PC-3 (cell line): ENCODE measurements at regions of chr6 and their contacts with region 1.

Region 1: DNA sequence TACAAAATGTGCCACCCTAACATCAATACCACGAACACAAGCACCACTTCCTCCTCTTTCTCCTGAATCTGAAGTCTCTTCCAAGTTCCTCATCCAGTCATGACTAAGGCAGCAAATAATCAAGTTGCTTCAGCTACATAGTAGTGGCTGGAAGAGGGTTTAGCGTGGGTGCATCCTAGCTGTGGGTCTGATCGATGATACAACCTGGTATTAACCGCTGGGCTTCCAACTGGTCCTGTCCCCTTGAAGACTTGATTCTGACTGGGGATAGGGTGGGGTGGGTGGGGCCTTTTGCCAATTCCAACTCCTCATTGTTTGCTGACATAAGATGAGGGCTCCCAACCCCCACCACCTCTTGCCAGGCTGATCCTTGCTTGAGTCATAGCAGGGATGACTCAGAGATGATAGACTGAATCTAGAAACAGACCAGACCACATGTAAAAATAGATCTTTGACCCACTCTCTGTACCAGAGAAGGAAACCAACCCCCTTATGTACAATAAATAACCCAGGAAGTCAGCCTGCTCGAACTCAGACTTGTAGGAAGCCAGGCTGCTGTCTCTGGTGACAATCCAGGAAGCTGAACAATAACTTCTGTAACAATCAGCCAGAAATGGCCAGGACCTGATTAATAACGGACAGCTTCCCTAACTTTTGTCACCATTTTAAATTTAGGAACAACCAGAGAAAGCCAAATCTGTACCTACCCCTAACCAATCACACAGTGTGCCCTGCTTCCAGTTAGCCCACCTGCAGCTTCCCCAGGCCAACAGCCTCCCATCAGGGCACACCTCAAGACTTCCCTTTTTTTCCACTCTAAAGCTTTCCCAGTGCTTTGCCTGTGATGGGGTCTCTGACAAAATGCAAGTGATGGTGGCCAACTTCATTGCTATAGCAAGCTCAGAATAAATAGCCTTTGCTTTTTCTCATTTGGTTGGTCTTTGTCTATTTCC is 68.9 kb upstream of the FAM184A start:
- DNase-seq: peak; percentile 95
- ATAC-seq: peak; percentile 77
- H3K4me3 ChIP-seq: peak overlapping the region; percentile 53
- H3K27ac ChIP-seq: peak overlapping the region; percentile 92
- H3K4me1 ChIP-seq: peaks cover 38% of the 10 kb centered on the region
- H3K27me3 ChIP-seq: no peaks in the 10 kb centered on the region
- CTCF ChIP-seq: no peak

Region 2: GRCh38 chr6:118993803-118994251 is 153.6 kb before region 1 on chr6:
- CTCF ChIA-PET with region 1: no interaction called
- POLR2A ChIA-PET with region 1: no interaction called
- intact Hi-C with region 1: no loop called
- DNase-seq: no peak
- ATAC-seq: no peak
- H3K4me3 ChIP-seq: no peak overlapping the region
- H3K27ac ChIP-seq: no peak overlapping the region
- H3K4me1 ChIP-seq: no peaks in the 10 kb centered on the region
- H3K27me3 ChIP-seq: no peaks in the 10 kb centered on the region
- CTCF ChIP-seq: no peak

Region 3: DNA sequence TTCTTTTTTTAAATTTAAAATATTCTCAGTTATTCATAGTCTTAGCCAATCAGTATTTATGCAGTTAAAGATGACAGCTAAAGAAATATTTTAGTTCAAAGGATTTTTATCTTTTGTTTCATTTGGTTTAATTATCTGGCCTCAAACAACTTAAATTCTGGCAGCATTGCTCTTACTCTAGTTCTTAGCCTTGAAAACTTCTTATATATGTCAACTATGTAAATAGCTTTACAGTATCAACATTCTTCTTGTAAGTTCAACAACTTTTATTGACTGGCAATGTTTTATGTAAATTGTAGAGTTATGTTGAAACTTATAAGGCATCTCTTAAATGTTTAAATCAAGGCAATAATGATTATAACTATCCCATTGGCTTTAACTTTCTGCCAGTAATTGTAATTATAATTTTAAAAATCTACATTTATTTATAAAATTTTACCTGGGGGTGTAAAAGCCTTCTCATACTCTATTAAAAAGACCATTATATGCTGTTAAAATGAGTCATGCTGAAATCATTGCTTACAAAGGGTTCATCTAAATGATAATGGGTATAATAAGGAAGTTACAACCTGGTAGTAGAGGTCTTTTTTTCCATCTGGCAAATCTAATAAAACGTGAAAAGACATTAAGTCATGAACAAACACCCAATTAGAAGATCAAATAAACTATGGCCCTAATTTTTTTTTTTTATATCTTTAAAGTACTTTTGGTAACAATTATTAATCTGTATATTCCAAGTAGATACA is 23.1 kb before region 1 on chr6:
- CTCF ChIA-PET with region 1: interaction called, 11 read pairs
- POLR2A ChIA-PET with region 1: interaction called, 5 read pairs
- intact Hi-C with region 1: loop called (anchors 1 kb)
- DNase-seq: peak; percentile 70
- ATAC-seq: peak; percentile 73
- H3K4me3 ChIP-seq: no peak overlapping the region
- H3K27ac ChIP-seq: peak overlapping the region; percentile 49
- H3K4me1 ChIP-seq: peaks cover 20% of the 10 kb centered on the region
- H3K27me3 ChIP-seq: no peaks in the 10 kb centered on the region
- CTCF ChIP-seq: no peak

Region 4: GRCh38 chr6:119261945-119262286 is 114.5 kb after region 1 on chr6:
- CTCF ChIA-PET with region 1: no interaction called
- POLR2A ChIA-PET with region 1: no interaction called
- intact Hi-C with region 1: loop called (anchors 1 kb)
- DNase-seq: no peak
- ATAC-seq: peak; percentile 6; the same call in 1 of the 2 replicates
- H3K4me3 ChIP-seq: no peak overlapping the region; the same call in 1 of the 2 replicates
- H3K27ac ChIP-seq: peak overlapping the region; percentile 75
- H3K4me1 ChIP-seq: peaks cover 32% of the 10 kb centered on the region
- H3K27me3 ChIP-seq: no peaks in the 10 kb centered on the region
- CTCF ChIP-seq: no peak

Region 5: GRCh38 chr6:119328892-119329793 is 181.8 kb after region 1 on chr6:
- CTCF ChIA-PET with region 1: no interaction called
- POLR2A ChIA-PET with region 1: no interaction called
- intact Hi-C with region 1: no loop called
- DNase-seq: no peak
- ATAC-seq: no peak; the same call in none of the 2 replicates
- H3K4me3 ChIP-seq: no peak overlapping the region
- H3K27ac ChIP-seq: no peak overlapping the region
- H3K4me1 ChIP-seq: no peaks in the 10 kb centered on the region
- H3K27me3 ChIP-seq: no peaks in the 10 kb centered on the region
- CTCF ChIP-seq: no peak

Region 6: GRCh38 chr6:119742188-119742803 is 594.9 kb after region 1 on chr6:
- CTCF ChIA-PET with region 1: no interaction called
- POLR2A ChIA-PET with region 1: no interaction called
- intact Hi-C with region 1: loop called (anchors 5 kb)
- DNase-seq: peak; percentile 72
- ATAC-seq: peak; percentile 73
- H3K4me3 ChIP-seq: no peak overlapping the region
- H3K27ac ChIP-seq: no peak overlapping the region
- H3K4me1 ChIP-seq: no peaks in the 10 kb centered on the region
- H3K27me3 ChIP-seq: no peaks in the 10 kb centered on the region
- CTCF ChIP-seq: peak; percentile 89

Region 7: GRCh38 chr6:119978274-119978889 is 831.0 kb after region 1 on chr6:
- CTCF ChIA-PET with region 1: no interaction called
- POLR2A ChIA-PET with region 1: no interaction called
- intact Hi-C with region 1: loop called (anchors 10 kb)
- DNase-seq: peak; percentile 51
- ATAC-seq: peak; percentile 64
- H3K4me3 ChIP-seq: no peak overlapping the region
- H3K27ac ChIP-seq: no peak overlapping the region
- H3K4me1 ChIP-seq: no peaks in the 10 kb centered on the region
- H3K27me3 ChIP-seq: no peaks in the 10 kb centered on the region
- CTCF ChIP-seq: peak; percentile 81

Region 8: DNA sequence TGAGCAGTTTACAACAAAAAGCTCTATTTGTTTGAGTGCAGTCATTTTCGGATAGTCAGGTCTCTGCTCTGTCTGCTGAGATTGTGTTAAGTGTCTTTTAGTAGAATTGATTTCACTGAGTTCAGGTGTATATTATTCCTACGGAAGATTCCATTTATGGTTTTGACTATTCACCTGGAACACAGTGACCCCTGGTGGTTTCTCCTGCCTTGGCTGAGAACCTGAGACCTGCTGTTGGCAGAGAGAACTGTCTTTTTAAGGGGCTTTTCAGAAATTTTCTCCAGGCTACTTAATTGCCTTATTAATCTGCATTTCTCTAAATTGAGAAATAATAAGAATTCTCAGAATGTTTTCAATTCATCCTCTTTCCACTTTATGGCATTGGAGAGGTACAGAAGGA is 1678.9 kb after region 1 on chr6:
- CTCF ChIA-PET with region 1: no interaction called
- POLR2A ChIA-PET with region 1: no interaction called
- intact Hi-C with region 1: loop called (anchors 5 kb)
- DNase-seq: peak; percentile 65
- ATAC-seq: peak; percentile 53
- H3K4me3 ChIP-seq: no peak overlapping the region
- H3K27ac ChIP-seq: no peak overlapping the region
- H3K4me1 ChIP-seq: peaks cover 8% of the 10 kb centered on the region
- H3K27me3 ChIP-seq: no peaks in the 10 kb centered on the region
- CTCF ChIP-seq: peak; percentile 77